K562 (cell line): ENCODE measurements at regions of chr3 and their contacts with region 1.

Region 1: GRCh38 chr3:142087676-142088075 is 61.7 kb downstream of the TFDP2 start:
- DNase-seq: no peak
- ATAC-seq: no peak
- H3K4me3 ChIP-seq: no peak overlapping the region
- H3K27ac ChIP-seq: no peak overlapping the region
- H3K4me1 ChIP-seq: no peaks in the 10 kb centered on the region
- H3K27me3 ChIP-seq: no peaks in the 10 kb centered on the region
- CTCF ChIP-seq: no peak
- EP300 ChIP-seq: no peak
- POLR2A ChIP-seq: no peak
- RAD21 ChIP-seq: no peak

Region 2: DNA sequence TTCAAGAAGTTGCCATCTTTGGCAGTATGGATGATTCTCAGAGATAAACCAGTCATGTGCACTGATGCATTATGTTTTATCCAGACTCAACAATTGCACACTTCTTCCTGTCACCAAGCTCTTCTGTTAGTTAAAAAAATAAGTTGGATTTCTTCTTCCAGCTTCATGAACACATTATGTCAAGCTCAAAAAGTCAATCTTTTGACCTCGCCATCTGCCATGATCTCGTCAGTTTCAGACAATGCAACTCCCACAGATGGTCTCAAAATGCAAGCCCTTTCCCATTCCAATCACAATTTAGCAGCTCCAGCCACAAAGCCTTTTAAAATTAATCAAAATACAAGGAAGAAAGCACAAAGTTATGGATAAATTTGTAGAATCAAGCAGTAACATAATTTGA is 18.9 kb after region 1 on chr3:
- CTCF ChIA-PET with region 1: no interaction called
- POLR2A ChIA-PET with region 1: interaction called, 3 read pairs
- in situ Hi-C with region 1: no loop called
- intact Hi-C with region 1: loop called (anchors 1 kb)
- DNase-seq: no peak
- ATAC-seq: no peak
- H3K4me3 ChIP-seq: no peak overlapping the region
- H3K27ac ChIP-seq: no peak overlapping the region
- H3K4me1 ChIP-seq: no peaks in the 10 kb centered on the region
- H3K27me3 ChIP-seq: no peaks in the 10 kb centered on the region
- CTCF ChIP-seq: no peak
- EP300 ChIP-seq: no peak
- POLR2A ChIP-seq: no peak
- RAD21 ChIP-seq: no peak